PC-3 (cell line): ENCODE measurements at regions of chrX and their contacts with region 1.

Region 1: GRCh38 chrX:9148621-9149385 is 114.9 kb upstream of the FAM9B start:
- DNase-seq: peak; percentile 76
- ATAC-seq: peak; percentile 61
- H3K4me3 ChIP-seq: no peak overlapping the region
- H3K27ac ChIP-seq: peak overlapping the region; percentile 84
- H3K4me1 ChIP-seq: peaks cover 34% of the 10 kb centered on the region
- H3K27me3 ChIP-seq: no peaks in the 10 kb centered on the region
- CTCF ChIP-seq: no peak

Region 2: DNA sequence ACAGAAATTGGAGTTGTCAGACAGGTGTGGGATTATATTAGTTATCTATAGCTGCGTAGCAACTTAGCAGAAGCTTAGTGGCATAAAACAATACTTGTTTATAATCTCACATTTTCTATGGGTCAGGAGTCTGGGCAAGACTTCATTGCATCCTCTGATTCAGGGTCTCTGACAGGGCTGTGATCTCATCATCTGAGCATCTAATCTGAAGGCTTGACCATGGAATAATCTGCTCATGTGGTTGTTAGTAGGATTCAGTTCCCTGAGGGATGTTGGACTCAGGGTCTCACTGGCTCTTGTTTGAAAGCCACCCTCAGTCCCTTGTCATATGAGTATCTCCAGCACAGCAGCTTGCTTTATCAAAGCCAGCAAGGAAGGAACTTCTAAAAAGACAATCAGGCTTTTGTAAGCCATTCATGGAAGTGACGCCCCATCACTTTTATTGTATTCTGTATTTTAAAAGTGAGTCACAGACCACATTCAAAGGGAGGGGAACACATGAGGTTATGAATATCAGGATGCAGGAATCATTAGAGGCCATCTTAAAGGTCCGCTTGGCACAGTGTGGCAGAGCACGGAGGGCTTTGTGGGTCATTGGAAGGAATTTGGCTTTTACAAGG is 77.7 kb before region 1 on chrX:
- CTCF ChIA-PET with region 1: no interaction called
- POLR2A ChIA-PET with region 1: no interaction called
- intact Hi-C with region 1: loop called (anchors 1 kb)
- DNase-seq: peak; percentile 82
- ATAC-seq: peak; percentile 90
- H3K4me3 ChIP-seq: no peak overlapping the region
- H3K27ac ChIP-seq: peak overlapping the region; percentile 91
- H3K4me1 ChIP-seq: peaks cover 16% of the 10 kb centered on the region
- H3K27me3 ChIP-seq: no peaks in the 10 kb centered on the region
- CTCF ChIP-seq: no peak

Region 3: DNA sequence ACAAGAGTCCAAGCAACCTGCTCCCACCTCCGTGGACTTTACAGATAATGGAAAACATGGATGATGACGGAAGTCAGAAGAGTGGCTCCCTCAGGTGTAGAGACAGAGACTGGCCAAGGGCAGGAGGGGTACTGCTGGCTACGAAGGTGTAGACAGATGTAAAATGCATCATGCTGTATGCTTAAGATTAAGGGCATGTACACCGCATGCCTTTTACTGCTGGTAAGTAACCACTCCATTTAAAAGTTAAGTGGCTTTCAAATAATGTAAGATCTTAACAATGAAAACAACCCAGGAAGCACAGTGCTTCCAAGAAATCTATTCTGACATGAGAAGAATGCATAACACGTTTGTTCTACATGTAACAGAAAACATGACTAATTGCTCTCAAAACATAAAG is 38.0 kb before region 1 on chrX:
- CTCF ChIA-PET with region 1: no interaction called
- POLR2A ChIA-PET with region 1: no interaction called
- intact Hi-C with region 1: loop called (anchors 5 kb)
- DNase-seq: no peak
- ATAC-seq: no peak
- H3K4me3 ChIP-seq: no peak overlapping the region
- H3K27ac ChIP-seq: no peak overlapping the region
- H3K4me1 ChIP-seq: peaks cover 11% of the 10 kb centered on the region; the same call in 1 of the 2 replicates
- H3K27me3 ChIP-seq: no peaks in the 10 kb centered on the region
- CTCF ChIP-seq: no peak

Region 4: GRCh38 chrX:9163214-9163681 is 14.4 kb after region 1 on chrX:
- CTCF ChIA-PET with region 1: no interaction called
- POLR2A ChIA-PET with region 1: no interaction called
- intact Hi-C with region 1: loop called (anchors 1 kb)
- DNase-seq: peak; percentile 79
- ATAC-seq: peak; percentile 56
- H3K4me3 ChIP-seq: peak overlapping the region; percentile 28; the same call in 1 of the 2 replicates
- H3K27ac ChIP-seq: peak overlapping the region; percentile 98
- H3K4me1 ChIP-seq: peaks cover 55% of the 10 kb centered on the region
- H3K27me3 ChIP-seq: no peaks in the 10 kb centered on the region
- CTCF ChIP-seq: no peak